ENCODE measurements at regions of chr5 and their contacts with region 1.

Region 1: GRCh38 chr5:180810210-180810958 is 7.8 kb upstream of the MGAT1 start:
- DNase-seq: peak; percentile 93 to 99 (median 95)

Region 2: GRCh38 chr5:180831139-180832048 is 21.0 kb after region 1 on chr5:
- intact Hi-C with region 1: loop called (anchors 1 kb)
- DNase-seq: peak; percentile 80 to 98 (median 88)